ENCODE measurements at regions of chr12 and their contacts with region 1.

Region 1: GRCh38 chr12:51172515-51173431 is at the start of gene TFCP2:
- DNase-seq: peak; percentile 97
- ATAC-seq: peak; percentile 96
- H3K4me3 ChIP-seq: peak within 1 kb of the TSS; percentile 57
- H3K27ac ChIP-seq: peak within 1 kb of the TSS; percentile 95
- H3K4me1 ChIP-seq: no peaks in the 10 kb centered on the region
- H3K27me3 ChIP-seq: no peaks in the 10 kb centered on the region
- CTCF ChIP-seq: no peak
- POLR2A ChIP-seq: peak; percentile 76
- RAD21 ChIP-seq: peak; percentile 21; the same call in 1 of the 2 replicates
- total RNA-seq, gene TFCP2: 10.0 and 13.3 TPM in 2 replicates

Region 2: GRCh38 chr12:51083126-51083833 is 89.5 kb before region 1 on chr12 and contains the start of gene CSRNP2:
- CTCF ChIA-PET with region 1: no interaction called
- POLR2A ChIA-PET with region 1: interaction called, 13 read pairs
- dilution Hi-C with region 1: no loop called
- in situ Hi-C with region 1: no loop called
- intact Hi-C with region 1: no loop called
- DNase-seq: peak; percentile 93
- ATAC-seq: peak; percentile 98
- H3K4me3 ChIP-seq: peak within 1 kb of the TSS; percentile 74
- H3K27ac ChIP-seq: peak within 1 kb of the TSS; percentile 66
- H3K4me1 ChIP-seq: peaks cover 2% of the 10 kb centered on the region; the same call in 1 of the 2 replicates
- H3K27me3 ChIP-seq: no peaks in the 10 kb centered on the region
- CTCF ChIP-seq: 0 out of 2 replicates have a peak, but pooled peaks have one; percentile 17
- POLR2A ChIP-seq: peak; percentile 100
- RAD21 ChIP-seq: no peak
- total RNA-seq, gene CSRNP2: 14.0 and 16.7 TPM in 2 replicates

Region 3: GRCh38 chr12:51127050-51127729 is 45.6 kb before region 1 on chr12:
- CTCF ChIA-PET with region 1: no interaction called
- POLR2A ChIA-PET with region 1: no interaction called
- dilution Hi-C with region 1: no loop called
- in situ Hi-C with region 1: no loop called
- intact Hi-C with region 1: loop called (anchors 5 kb)
- DNase-seq: peak; percentile 34
- ATAC-seq: peak; percentile 62; the same call in 1 of the 2 replicates
- H3K4me3 ChIP-seq: no peak overlapping the region
- H3K27ac ChIP-seq: no peak overlapping the region
- H3K4me1 ChIP-seq: peaks cover 3% of the 10 kb centered on the region
- H3K27me3 ChIP-seq: no peaks in the 10 kb centered on the region
- CTCF ChIP-seq: no peak
- POLR2A ChIP-seq: no peak
- RAD21 ChIP-seq: no peak

Region 4: GRCh38 chr12:51238510-51239334 is 65.9 kb after region 1 on chr12 and contains the start of gene DAZAP2:
- CTCF ChIA-PET with region 1: no interaction called
- POLR2A ChIA-PET with region 1: no interaction called
- dilution Hi-C with region 1: no loop called
- in situ Hi-C with region 1: no loop called
- intact Hi-C with region 1: loop called (anchors 2 kb)
- DNase-seq: peak; percentile 94
- ATAC-seq: peak; percentile 96
- H3K4me3 ChIP-seq: peak within 1 kb of the TSS; percentile 83
- H3K27ac ChIP-seq: peak within 1 kb of the TSS; percentile 96
- H3K4me1 ChIP-seq: peaks cover 8% of the 10 kb centered on the region
- H3K27me3 ChIP-seq: no peaks in the 10 kb centered on the region
- CTCF ChIP-seq: no peak
- POLR2A ChIP-seq: peak; percentile 95
- RAD21 ChIP-seq: no peak
- total RNA-seq, gene DAZAP2: 62.2 and 77.2 TPM in 2 replicates

Measured in IMR-90 (cell line).